ENCODE measurements at regions of chr20 and their contacts with region 1.

Region 1: DNA sequence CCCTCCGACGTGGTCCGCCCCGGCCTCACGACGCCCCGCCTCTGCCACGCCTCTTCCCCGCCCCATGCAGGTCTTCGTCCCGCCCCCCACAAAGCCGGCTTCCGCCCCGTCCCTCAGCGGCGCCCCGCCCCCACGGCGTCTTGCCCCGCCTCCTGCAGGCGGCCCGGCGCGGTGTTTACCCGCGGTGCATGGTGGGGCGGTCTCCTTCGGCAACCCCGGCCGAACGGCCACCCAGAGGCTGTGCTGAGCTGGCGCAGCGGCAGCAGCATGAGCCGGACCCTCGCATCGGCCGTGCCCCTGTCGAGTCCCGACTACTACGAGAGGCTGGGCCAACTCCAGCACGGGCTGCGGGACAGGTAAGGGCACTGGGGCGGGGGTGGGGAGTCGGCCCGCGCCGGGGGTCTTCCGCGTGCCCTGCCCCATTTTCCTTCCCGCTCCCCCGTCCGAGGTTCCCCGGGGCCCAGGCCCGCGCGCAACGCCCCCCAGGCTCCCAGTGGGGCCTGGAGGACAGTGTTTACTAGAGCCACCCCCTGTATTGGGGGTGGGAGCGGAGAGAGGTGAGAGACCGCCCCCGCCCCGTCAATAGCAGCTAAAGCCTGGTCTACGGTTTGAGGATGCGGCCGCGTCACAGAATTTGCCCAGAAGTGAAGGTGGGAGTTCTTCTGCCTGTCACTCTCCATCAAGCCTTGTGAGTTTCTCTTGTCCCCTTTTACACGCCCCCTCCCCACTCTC is at the start of gene KIZ:
- DNase-seq: peak; percentile 98
- ATAC-seq: peak; percentile 93
- H3K4me3 ChIP-seq: peak within 1 kb of the TSS; percentile 87
- H3K27ac ChIP-seq: no peak within 1 kb of the TSS
- H3K4me1 ChIP-seq: peaks cover 10% of the 10 kb centered on the region
- H3K27me3 ChIP-seq: no peaks in the 10 kb centered on the region
- CTCF ChIP-seq: no peak
- total RNA-seq, gene KIZ: 10.3 and 13.4 TPM in 2 replicates

Region 2: GRCh38 chr20:21089395-21089794 is 36.6 kb before region 1 on chr20:
- CTCF ChIA-PET with region 1: no interaction called
- POLR2A ChIA-PET with region 1: no interaction called
- intact Hi-C with region 1: loop called (anchors 1 kb)
- DNase-seq: peak; percentile 94
- ATAC-seq: peak; percentile 91
- H3K4me3 ChIP-seq: peak overlapping the region; percentile 10; the same call in 1 of the 2 replicates
- H3K27ac ChIP-seq: peak overlapping the region; percentile 50
- H3K4me1 ChIP-seq: peaks cover 25% of the 10 kb centered on the region
- H3K27me3 ChIP-seq: peaks cover 62% of the 10 kb centered on the region
- CTCF ChIP-seq: no peak

Region 3: DNA sequence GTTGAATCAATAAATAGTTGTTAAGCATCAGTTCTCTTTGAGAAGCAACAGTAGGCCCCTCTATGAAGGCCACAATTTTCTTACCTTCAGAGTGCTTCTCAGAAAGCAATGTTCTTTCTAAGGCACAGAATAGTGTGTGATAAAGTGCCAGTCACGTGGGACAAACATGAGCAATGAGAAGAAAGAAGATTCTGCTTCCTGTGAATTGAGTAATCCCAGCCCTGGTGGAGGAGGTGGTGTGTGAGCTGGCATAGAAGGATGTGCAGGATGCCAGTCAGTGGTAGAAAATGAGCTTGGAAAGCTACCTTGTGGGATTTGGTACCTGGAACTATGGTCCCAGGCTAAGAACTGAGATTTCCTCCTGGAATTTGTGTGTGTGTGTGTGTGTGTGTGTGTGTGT is 21.6 kb after region 1 on chr20:
- CTCF ChIA-PET with region 1: no interaction called
- POLR2A ChIA-PET with region 1: no interaction called
- intact Hi-C with region 1: no loop called
- DNase-seq: peak; percentile 57
- ATAC-seq: peak; percentile 38; the same call in 1 of the 2 replicates
- H3K4me3 ChIP-seq: no peak overlapping the region
- H3K27ac ChIP-seq: no peak overlapping the region
- H3K4me1 ChIP-seq: 0 out of 2 replicates have a peak, but pooled peaks cover 6% of the 10 kb centered on the region
- H3K27me3 ChIP-seq: no peaks in the 10 kb centered on the region
- CTCF ChIP-seq: no peak

Region 4: GRCh38 chr20:21182832-21183563 is 57.0 kb after region 1 on chr20:
- CTCF ChIA-PET with region 1: interaction called, 7 read pairs
- POLR2A ChIA-PET with region 1: no interaction called
- intact Hi-C with region 1: loop called (anchors 1 kb)
- DNase-seq: peak; percentile 96
- ATAC-seq: peak; percentile 96
- H3K4me3 ChIP-seq: peak overlapping the region; percentile 52
- H3K27ac ChIP-seq: peak overlapping the region; percentile 99
- H3K4me1 ChIP-seq: peaks cover 40% of the 10 kb centered on the region
- H3K27me3 ChIP-seq: no peaks in the 10 kb centered on the region
- CTCF ChIP-seq: no peak

Region 5: DNA sequence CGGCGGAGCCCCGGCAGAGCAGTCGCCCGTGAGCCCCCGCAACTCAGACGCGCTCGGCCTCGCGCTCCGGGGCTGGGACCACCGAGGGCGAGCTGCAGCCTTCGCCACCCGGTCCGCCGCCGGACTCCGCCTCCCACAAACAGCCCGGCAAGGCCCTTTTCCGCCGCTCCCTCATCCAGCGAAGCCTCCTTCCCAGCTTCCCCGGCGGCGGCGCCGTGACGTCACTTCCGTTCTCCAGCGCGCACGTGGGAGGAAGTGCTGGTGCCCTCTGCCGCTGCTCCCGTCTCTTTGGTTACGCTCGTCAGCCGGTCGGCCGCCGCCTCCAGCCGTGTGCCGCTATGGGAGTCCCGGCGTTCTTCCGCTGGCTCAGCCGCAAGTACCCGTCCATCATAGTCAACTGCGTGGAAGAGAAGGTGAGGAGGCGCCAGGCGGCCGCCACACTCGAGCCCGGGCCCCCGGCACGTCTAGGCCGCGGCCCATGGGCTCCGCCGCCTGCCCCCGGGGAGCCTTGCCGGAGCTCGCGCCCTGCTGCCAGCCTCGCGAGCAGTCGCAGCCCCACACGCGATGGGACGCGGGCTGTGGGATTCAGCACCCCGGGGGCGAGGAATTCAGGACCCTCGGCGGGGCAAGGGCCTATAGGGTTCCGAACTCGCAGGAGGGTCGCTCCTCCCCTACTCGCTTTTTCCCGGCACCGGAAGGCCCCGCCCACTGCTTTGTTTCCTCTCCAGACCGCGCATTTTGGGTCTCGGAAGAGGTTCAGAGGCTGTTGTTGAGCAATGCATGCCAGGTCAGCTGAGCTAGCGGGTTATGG is 177.3 kb after region 1 on chr20 and contains the start of gene XRN2:
- CTCF ChIA-PET with region 1: no interaction called
- POLR2A ChIA-PET with region 1: no interaction called
- intact Hi-C with region 1: loop called (anchors 5 kb)
- DNase-seq: peak; percentile 97
- ATAC-seq: peak; percentile 93
- H3K4me3 ChIP-seq: peak within 1 kb of the TSS; percentile 92
- H3K27ac ChIP-seq: peak within 1 kb of the TSS; percentile 74
- H3K4me1 ChIP-seq: peaks cover 16% of the 10 kb centered on the region
- H3K27me3 ChIP-seq: no peaks in the 10 kb centered on the region
- CTCF ChIP-seq: 0 out of 2 replicates have a peak, but pooled peaks have one; percentile 27
- total RNA-seq, gene XRN2: 71.5 and 76.8 TPM in 2 replicates

Region 6: GRCh38 chr20:21505161-21505809 is 379.3 kb after region 1 on chr20:
- CTCF ChIA-PET with region 1: interaction called, 5 read pairs
- POLR2A ChIA-PET with region 1: no interaction called
- intact Hi-C with region 1: loop called (anchors 5 kb)
- DNase-seq: peak; percentile 74
- ATAC-seq: peak; percentile 63
- H3K4me3 ChIP-seq: peak overlapping the region; percentile 55
- H3K27ac ChIP-seq: no peak overlapping the region
- H3K4me1 ChIP-seq: peaks cover 8% of the 10 kb centered on the region
- H3K27me3 ChIP-seq: peaks cover 38% of the 10 kb centered on the region
- CTCF ChIP-seq: peak; percentile 98

Measured in PC-3 (cell line).